ENCODE measurements at regions of chr18 and their contacts with region 1.

Region 1: GRCh38 chr18:22098563-22098989 is 70.8 kb upstream of the GATA6 start:
- DNase-seq: no peak
- ATAC-seq: peak in 1 of 4 donors; percentile 33
- H3K4me3 ChIP-seq: no peak overlapping the region
- H3K27ac ChIP-seq: peak overlapping the region in 1 of 12 donors; percentile 9
- H3K4me1 ChIP-seq: peaks cover 0 to 17% (median 1%) of the 10 kb centered on the region in 12 donors
- H3K27me3 ChIP-seq: peaks cover 0 to 2% (median 0%) of the 10 kb centered on the region in 9 donors
- CTCF ChIP-seq: no peak
- POLR2A ChIP-seq: no peak

Region 2: GRCh38 chr18:21203096-21203495 is 895.5 kb before region 1 on chr18:
- intact Hi-C with region 1: no loop called
- DNase-seq: no peak
- ATAC-seq: no peak
- H3K4me3 ChIP-seq: no peak overlapping the region
- H3K27ac ChIP-seq: no peak overlapping the region
- H3K4me1 ChIP-seq: no peaks in the 10 kb centered on the region
- H3K27me3 ChIP-seq: peaks cover 0 to 11% (median 0%) of the 10 kb centered on the region in 9 donors
- CTCF ChIP-seq: no peak
- POLR2A ChIP-seq: no peak

Region 3: GRCh38 chr18:22005191-22005841 is 93.3 kb before region 1 on chr18:
- intact Hi-C with region 1: loop called in 1 of 10 experiments (anchors 10 kb)
- DNase-seq: peak in 1 of 5 donors; percentile 49
- ATAC-seq: no peak
- H3K4me3 ChIP-seq: no peak overlapping the region
- H3K27ac ChIP-seq: peak overlapping the region in 1 of 12 donors; percentile 5
- H3K4me1 ChIP-seq: peaks cover 0 to 11% (median under 1%) of the 10 kb centered on the region in 12 donors
- H3K27me3 ChIP-seq: no peaks in the 10 kb centered on the region
- CTCF ChIP-seq: no peak
- POLR2A ChIP-seq: no peak